ENCODE measurements at regions of chr12 and their contacts with region 1.

Region 1: DNA sequence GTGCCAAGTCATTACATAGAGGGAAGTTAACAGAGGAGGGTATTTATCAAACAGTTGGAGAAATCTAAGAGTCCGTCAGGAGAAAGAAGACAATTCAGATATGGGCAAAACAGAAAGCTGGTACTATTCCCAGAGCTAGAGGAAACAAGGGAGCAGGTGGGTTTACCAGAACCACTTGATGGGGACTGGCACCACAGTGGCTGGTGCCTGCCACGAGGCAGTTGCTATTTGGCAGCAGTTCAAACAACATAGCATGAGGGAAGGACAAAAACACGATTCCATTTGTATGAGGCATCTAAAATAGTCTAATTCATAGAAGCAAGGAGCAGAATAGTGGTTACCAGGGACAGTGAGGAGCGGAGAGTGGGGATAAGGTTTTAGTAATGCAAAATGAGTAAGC is 24.6 kb upstream of the KLRD1 start:
- DNase-seq: no peak
- H3K4me3 ChIP-seq: no peak overlapping the region
- CTCF ChIP-seq: no peak
- POLR2A ChIP-seq: no peak

Region 2: GRCh38 chr12:10293570-10294227 is 10.7 kb after region 1 on chr12:
- intact Hi-C with region 1: loop called (anchors 1 kb)
- DNase-seq: no peak
- H3K4me3 ChIP-seq: no peak overlapping the region
- CTCF ChIP-seq: no peak
- POLR2A ChIP-seq: no peak

Region 3: DNA sequence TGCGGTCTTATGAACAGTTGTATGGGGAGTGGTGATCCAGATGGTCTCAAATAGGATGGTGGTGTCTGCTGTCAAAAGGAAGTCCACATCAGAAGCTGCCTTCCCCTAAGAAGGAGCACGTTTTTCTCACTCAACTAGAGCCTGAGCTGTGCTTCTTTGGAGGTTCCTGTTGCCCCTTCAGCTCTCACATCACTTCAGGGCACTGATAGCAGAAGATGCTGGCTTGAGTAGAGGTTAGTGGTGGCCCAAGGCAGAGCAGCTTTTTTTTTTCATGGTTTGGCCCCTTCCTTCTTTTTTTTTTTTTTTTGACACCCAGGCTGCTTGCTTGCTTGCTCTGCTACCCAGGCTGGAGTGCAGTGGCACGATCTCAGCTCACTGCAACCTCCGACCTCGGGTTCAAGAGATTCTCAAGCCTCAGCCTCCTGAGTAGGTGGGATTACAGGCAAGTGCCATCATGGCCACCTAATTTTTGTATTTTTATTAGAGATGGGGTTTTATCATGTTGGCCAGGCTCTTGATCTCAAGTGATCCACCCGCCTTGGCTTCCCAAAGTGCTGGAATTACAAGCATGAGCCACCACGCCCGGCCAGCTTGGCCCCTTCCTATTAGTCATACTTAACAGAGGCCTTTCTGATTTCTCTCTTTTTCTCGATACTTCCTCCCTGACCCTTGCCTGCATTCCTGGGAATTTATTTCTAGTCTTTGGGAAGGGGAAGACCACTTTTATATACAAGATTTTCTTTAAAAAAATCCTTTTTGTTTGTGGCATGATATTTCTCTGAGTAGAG is 56.2 kb after region 1 on chr12:
- intact Hi-C with region 1: no loop called
- DNase-seq: no peak
- H3K4me3 ChIP-seq: no peak overlapping the region
- CTCF ChIP-seq: no peak
- POLR2A ChIP-seq: no peak